ENCODE measurements at regions of chr1 and their contacts with region 1.

Region 1: DNA sequence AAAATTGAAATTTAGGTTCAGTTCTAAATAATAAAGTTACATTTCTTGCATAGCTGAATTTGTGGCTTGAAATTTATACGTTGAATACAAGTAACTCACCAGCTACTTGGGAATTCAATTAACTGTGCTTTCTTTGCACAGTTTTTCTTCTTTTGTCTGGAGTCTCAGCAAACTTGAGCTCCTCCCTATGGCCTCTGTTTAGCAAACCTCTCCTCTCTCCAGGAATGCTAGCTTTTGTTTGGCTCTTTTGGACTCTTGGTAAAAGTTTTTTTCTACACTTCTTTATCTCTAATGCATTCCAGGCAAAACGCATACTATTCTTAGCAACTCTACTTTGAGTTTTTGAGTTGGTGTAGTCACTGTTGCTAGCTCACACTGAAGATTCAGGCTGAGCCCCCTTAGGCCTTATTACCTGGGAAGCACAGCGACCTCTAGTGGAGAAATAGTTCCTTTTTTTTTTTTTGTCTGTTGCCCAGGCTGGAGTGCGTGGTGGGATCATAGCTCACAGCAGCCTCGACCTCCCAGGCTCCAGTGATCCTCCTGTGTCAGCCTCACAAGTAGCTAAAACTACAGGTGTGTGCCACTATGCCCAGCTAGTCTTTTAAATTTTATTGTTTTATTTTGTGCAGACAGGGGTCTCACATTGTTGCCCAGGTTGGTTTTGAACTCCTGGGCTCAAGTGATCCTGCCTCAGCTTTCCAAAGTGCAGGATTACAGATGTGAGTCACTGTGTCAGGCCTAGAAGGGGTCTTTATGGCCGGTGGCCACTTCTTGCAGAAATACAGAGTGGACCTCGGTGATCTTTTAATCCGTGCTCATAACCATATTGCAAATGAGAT is 61.7 kb downstream of the CASQ2 start:
- DNase-seq: peak; percentile 45 to 54
- H3K4me3 ChIP-seq: no peak overlapping the region
- H3K4me3 Mint-ChIP-seq: no peak overlapping the region
- H3K27ac Mint-ChIP-seq: peak overlapping the region; percentile 83
- H3K4me1 ChIP-seq: peaks cover 37% of the 10 kb centered on the region
- H3K4me1 Mint-ChIP-seq: peaks cover 14% of the 10 kb centered on the region
- H3K27me3 ChIP-seq: no peaks in the 10 kb centered on the region
- H3K27me3 Mint-ChIP-seq: no peaks in the 10 kb centered on the region
- CTCF ChIP-seq: peak; percentile 49 to 62

Region 2: GRCh38 chr1:115609021-115609420 is 97.8 kb before region 1 on chr1:
- CTCF ChIA-PET with region 1: interaction called, 21 read pairs
- POLR2A ChIA-PET with region 1: no interaction called
- intact Hi-C with region 1: loop called (anchors 1 kb)
- DNase-seq: no peak
- H3K4me3 ChIP-seq: no peak overlapping the region
- H3K4me3 Mint-ChIP-seq: no peak overlapping the region
- H3K27ac Mint-ChIP-seq: no peak overlapping the region
- H3K4me1 ChIP-seq: no peaks in the 10 kb centered on the region
- H3K4me1 Mint-ChIP-seq: peaks cover 6% of the 10 kb centered on the region
- H3K27me3 ChIP-seq: no peaks in the 10 kb centered on the region
- H3K27me3 Mint-ChIP-seq: no peaks in the 10 kb centered on the region
- CTCF ChIP-seq: no peak

Region 3: DNA sequence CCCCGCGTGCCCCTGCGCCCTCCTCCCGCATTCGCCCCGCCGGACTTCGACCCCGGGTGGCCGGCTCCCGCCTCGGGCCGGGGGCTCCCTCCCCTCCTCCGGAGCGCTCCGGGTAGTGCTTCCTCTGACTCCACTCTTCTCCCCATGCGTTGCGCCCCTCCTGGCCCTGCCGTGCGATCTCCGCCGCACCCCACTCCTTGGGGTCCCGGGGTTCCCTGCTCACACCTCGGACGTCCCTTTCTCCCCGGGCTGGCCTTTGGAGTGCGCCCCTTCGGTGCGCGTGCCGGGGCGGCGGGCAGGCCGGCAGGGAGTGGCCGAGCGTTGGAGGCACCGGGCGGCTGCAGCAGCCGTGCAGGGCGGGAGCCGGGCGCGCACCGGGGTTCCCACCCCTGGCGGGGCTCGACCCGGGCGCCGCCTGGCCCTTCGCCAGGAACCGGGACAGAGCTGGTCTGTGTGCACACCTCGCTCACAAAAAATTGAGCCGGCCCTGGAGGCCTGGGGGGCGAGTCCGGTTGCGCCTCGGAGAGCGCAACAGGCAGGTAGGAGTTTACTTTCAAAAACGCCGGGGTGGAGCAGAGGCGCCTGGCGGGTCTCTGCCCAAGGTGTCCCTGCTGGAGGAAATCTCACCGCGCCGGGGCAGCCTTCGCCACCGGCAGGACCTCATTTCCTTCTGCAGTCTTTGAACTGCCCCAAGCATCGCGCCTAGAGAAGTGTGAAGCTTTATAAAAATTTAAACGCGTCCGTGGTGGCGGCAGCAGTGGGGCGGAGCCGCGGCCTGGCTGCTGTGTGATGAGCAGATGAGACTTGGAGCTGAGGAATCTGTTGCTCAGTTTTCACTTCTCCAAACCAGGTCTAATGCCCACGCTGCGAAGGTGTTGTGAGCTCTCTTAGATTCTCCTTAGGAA is 64.4 kb before region 1 on chr1:
- CTCF ChIA-PET with region 1: interaction called, 17 read pairs
- POLR2A ChIA-PET with region 1: interaction called, 5 read pairs
- intact Hi-C with region 1: loop called (anchors 1 kb)
- DNase-seq: peak; percentile 64 to 66
- H3K4me3 ChIP-seq: peak overlapping the region; percentile 78
- H3K4me3 Mint-ChIP-seq: peak overlapping the region; percentile 92
- H3K27ac Mint-ChIP-seq: peak overlapping the region; percentile 76
- H3K4me1 ChIP-seq: peaks cover 20% of the 10 kb centered on the region
- H3K4me1 Mint-ChIP-seq: peaks cover 4% of the 10 kb centered on the region
- H3K27me3 ChIP-seq: no peaks in the 10 kb centered on the region
- H3K27me3 Mint-ChIP-seq: no peaks in the 10 kb centered on the region
- CTCF ChIP-seq: peak in 1 of 2 experiments; percentile 30

Region 4: DNA sequence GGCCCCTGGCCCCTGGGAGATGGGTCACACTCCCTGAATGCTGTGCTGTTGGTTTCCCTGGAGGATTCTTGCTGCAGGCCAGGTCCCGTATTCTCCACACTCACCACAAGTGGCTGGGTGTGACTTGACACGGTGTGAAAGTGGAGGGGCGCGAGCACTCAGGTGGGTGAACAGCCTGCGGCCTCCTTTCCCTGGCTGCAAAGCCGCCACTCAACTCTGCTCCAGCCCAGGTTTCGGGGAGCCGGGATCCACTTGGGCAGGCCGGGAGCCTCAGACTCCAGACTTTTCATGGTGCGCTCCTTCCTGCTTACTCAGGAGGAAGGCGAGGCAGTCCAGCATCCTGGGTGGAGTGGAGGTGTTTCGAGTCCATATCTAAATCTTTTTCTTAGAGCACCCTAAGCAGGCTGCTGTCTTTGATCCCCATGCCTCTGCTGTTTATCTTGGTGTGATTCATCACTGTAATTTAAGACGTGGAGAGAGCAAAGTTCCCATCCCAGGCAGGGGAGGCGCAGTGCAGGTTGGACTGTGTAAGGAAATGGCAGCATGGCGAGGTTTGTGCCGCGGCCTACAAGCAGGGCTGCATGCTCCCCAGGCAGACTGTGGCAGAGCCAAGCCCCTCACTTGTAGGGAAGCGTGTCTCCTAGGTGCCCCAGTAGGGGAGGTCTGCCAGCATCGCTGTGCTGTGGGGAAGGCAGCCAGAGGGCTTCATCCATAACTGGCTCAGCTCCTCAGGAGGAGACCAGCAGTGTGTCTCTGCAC is 35.5 kb before region 1 on chr1:
- CTCF ChIA-PET with region 1: interaction called, 13 read pairs
- POLR2A ChIA-PET with region 1: no interaction called
- intact Hi-C with region 1: no loop called
- DNase-seq: peak; percentile 54 to 74
- H3K4me3 ChIP-seq: no peak overlapping the region
- H3K4me3 Mint-ChIP-seq: peak overlapping the region; percentile 24
- H3K27ac Mint-ChIP-seq: peak overlapping the region; percentile 53
- H3K4me1 ChIP-seq: peaks cover 30% of the 10 kb centered on the region
- H3K4me1 Mint-ChIP-seq: peaks cover 8% of the 10 kb centered on the region
- H3K27me3 ChIP-seq: no peaks in the 10 kb centered on the region
- H3K27me3 Mint-ChIP-seq: no peaks in the 10 kb centered on the region
- CTCF ChIP-seq: no peak

Region 5: DNA sequence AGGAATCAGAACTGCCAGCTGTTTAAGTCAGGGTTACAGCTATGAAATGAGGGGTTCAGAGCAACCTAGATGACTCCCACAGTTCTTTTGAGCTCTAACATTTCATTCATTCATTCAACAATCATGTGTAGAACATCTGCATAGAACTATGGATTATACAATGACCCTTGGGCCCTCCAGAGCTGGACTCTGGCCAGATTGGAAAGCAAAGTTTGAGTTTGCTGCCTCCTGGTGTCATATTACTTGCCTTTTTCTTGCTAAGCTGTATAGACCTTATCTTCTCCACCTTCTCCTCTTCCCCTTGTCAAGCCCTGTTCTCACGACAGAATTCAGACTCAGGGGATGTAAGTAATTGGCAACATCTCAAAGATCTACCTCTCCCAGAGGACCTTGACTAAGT is 57.7 kb after region 1 on chr1:
- CTCF ChIA-PET with region 1: interaction called, 21 read pairs
- POLR2A ChIA-PET with region 1: interaction called, 4 read pairs
- intact Hi-C with region 1: no loop called
- DNase-seq: peak; percentile 47 to 57
- H3K4me3 ChIP-seq: no peak overlapping the region
- H3K4me3 Mint-ChIP-seq: no peak overlapping the region
- H3K27ac Mint-ChIP-seq: no peak overlapping the region
- H3K4me1 ChIP-seq: no peaks in the 10 kb centered on the region
- H3K4me1 Mint-ChIP-seq: peaks cover 11% of the 10 kb centered on the region
- H3K27me3 ChIP-seq: no peaks in the 10 kb centered on the region
- H3K27me3 Mint-ChIP-seq: no peaks in the 10 kb centered on the region
- CTCF ChIP-seq: peak; percentile 46 to 50

Region 6: GRCh38 chr1:115771847-115772457 is 65.1 kb after region 1 on chr1:
- CTCF ChIA-PET with region 1: interaction called, 14 read pairs
- POLR2A ChIA-PET with region 1: no interaction called
- intact Hi-C with region 1: no loop called
- DNase-seq: peak; percentile 75 to 77
- H3K4me3 ChIP-seq: no peak overlapping the region
- H3K4me3 Mint-ChIP-seq: no peak overlapping the region
- H3K27ac Mint-ChIP-seq: no peak overlapping the region
- H3K4me1 ChIP-seq: peaks cover 6% of the 10 kb centered on the region; the same call in 1 of the 2 replicates
- H3K4me1 Mint-ChIP-seq: peaks cover 11% of the 10 kb centered on the region
- H3K27me3 ChIP-seq: no peaks in the 10 kb centered on the region
- H3K27me3 Mint-ChIP-seq: no peaks in the 10 kb centered on the region
- CTCF ChIP-seq: peak; percentile 30 to 41